ENCODE measurements at regions of chr3 and their contacts with region 1.

Region 1: DNA sequence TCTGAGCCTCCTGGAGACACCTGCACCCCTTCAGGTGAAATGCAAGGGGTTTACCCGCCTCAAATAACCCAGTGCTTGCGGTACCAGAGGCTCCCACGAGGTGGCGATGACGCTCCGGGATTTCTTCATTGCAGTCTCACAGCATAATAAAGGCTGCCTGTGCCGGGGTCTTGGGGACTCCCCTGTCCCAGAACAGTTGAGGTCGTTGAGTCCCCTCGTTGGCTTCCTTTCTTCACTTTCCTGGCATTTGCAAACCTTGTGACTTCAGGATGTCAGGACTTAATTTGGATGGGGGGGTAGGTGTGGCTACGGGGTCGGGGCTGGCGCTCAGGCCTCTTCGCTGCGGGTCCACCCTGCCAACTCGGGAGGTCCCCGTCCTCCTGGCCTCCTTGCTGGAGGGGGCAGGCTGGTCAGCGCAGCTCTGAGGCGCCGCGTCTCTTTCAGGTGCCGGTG is 1.3 kb downstream of the GNAT1 start:
- DNase-seq: peak; percentile 80
- H3K4me3 ChIP-seq: peak overlapping the region in 1 of 2 donors; percentile 8
- H3K27ac ChIP-seq: no peak overlapping the region
- H3K4me1 ChIP-seq: peaks cover 9% of the 10 kb centered on the region
- H3K27me3 ChIP-seq: peaks cover 3% of the 10 kb centered on the region
- CTCF ChIP-seq: peak; percentile 75 to 91 (median 91)
- POLR2A ChIP-seq: no peak

Region 2: GRCh38 chr3:50121416-50122032 is 71.2 kb before region 1 on chr3:
- intact Hi-C with region 1: loop called (anchors 5 kb)
- DNase-seq: peak; percentile 74
- H3K4me3 ChIP-seq: no peak overlapping the region
- H3K27ac ChIP-seq: no peak overlapping the region
- H3K4me1 ChIP-seq: peaks cover 31% of the 10 kb centered on the region
- H3K27me3 ChIP-seq: no peaks in the 10 kb centered on the region
- CTCF ChIP-seq: peak; percentile 78 to 86 (median 84)
- POLR2A ChIP-seq: no peak

Region 3: DNA sequence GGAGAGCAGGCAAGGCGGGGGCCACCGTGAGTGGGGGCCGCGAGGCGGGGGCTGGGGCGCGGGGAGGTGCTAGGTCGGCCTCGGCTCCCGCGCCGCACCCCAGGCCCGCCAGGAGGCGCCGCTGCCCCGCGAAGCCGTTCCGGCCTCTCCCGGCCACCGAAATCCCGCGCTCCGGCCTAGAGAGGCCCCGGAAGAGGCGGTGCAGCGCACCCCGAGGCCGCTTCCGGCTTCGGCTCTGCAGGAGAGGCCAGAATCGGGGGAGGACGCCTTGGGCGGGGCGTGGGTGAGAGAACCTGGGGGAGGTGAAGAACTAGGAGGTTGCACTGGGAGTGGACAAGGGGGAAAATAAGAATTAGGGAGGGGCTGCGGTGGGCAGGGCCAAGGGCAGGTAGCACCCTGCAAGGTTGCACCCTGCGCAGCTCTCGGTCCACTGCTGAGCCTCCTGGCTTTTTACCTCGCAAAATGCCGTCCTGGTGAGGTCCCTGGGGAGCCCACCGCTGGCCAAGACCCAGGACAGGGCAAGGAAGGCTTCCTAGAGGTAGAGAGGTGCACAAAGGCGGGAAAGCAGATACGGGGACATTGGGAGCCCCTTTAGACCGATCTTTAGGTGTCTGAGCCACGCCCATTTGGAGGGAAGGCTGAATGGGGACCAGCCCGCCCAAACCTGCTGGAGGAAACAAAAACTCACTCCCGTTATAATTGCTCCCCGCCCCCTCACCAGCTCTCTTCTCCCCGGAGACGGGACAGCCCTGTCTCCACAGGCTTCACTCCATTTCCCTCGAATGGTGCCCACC is 34.9 kb after region 1 on chr3:
- intact Hi-C with region 1: loop called (anchors 5 kb)
- DNase-seq: peak; percentile 93
- H3K4me3 ChIP-seq: peak overlapping the region; percentile 49 to 69
- H3K27ac ChIP-seq: peak overlapping the region; percentile 62 to 65
- H3K4me1 ChIP-seq: peaks cover 13% of the 10 kb centered on the region
- H3K27me3 ChIP-seq: no peaks in the 10 kb centered on the region
- CTCF ChIP-seq: peak; percentile 80 to 89 (median 85)
- POLR2A ChIP-seq: no peak

Region 4: DNA sequence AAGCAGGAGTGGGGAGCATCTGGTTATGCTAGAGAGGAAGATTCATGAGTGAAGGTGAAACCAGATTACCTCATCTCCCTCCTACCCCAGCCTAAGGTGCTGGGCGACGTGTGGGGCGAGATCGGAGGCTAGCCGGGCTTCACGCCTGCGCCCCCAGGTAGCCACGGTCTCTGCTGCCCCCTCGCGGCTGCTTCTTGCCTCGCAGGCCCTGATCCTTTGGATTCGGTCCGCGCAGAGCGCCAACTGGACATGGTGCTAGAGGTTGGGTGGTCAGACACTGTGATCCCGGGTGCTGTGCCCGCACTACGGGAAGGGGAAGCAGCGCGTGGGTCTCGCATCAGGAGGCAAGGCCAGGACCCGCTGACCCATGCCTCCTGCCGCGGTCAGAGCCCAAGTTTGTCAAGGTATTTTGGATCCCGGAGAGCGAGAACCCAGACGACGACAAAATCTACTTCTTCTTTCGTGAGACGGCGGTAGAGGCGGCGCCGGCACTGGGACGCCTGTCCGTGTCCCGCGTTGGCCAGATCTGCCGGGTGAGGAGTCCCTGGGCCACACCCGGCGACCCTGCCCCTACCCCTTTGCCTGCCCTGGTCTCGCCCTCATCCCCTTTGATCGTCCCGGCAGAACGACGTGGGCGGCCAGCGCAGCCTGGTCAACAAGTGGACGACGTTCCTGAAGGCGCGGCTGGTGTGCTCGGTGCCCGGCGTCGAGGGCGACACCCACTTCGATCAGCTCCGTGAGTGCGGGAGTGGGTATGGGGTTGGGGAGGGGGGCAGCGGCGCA is 80.4 kb after region 1 on chr3:
- intact Hi-C with region 1: loop called (anchors 10 kb)
- DNase-seq: peak; percentile 89
- H3K4me3 ChIP-seq: peak overlapping the region in 1 of 2 donors; percentile 35
- H3K27ac ChIP-seq: no peak overlapping the region
- H3K4me1 ChIP-seq: peaks cover 22% of the 10 kb centered on the region
- H3K27me3 ChIP-seq: no peaks in the 10 kb centered on the region
- CTCF ChIP-seq: peak; percentile 95 to 99 (median 98)
- POLR2A ChIP-seq: no peak

Measured in testis (tissue), 5 donors.